Natural killer cell (primary cell): ENCODE measurements at regions of chr2 and their contacts with region 1.

Region 1: DNA sequence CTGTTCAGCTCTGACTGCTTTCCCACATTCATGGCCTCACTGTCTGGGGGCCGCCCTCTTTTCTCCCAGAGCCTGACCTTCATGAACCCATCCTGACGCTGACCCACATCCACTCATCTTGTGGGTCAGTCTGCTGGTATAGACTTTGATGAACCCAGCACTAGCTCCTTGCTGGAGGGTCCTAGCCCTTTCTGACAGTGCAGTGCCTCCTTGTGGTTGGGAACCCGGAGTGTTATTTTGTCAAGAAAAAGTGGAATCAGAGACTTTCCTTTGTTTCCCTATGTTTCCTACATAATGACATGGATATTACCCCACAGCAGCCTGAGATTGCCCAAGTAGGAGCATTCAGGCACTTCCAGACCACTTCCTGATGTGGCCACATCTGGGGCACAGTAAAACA is 19.3 kb upstream of the OSR1 start:
- DNase-seq: peak in 1 of 2 donors; percentile 33
- ATAC-seq: no peak
- H3K4me3 ChIP-seq: no peak overlapping the region
- H3K4me3 Mint-ChIP-seq: no peak overlapping the region
- H3K27ac ChIP-seq: no peak overlapping the region
- H3K27ac Mint-ChIP-seq: no peak overlapping the region
- H3K4me1 ChIP-seq: no peaks in the 10 kb centered on the region
- H3K4me1 Mint-ChIP-seq: no peaks in the 10 kb centered on the region
- H3K27me3 ChIP-seq: peaks cover 2% of the 10 kb centered on the region
- H3K27me3 Mint-ChIP-seq: peaks cover 20 to 49% of the 10 kb centered on the region in 2 donors
- CTCF ChIP-seq: no peak

Region 2: GRCh38 chr2:18520451-18521425 is 857.0 kb before region 1 on chr2:
- intact Hi-C with region 1: loop called (anchors 10 kb)
- DNase-seq: peak; percentile 67 to 82
- ATAC-seq: peak; percentile 62 to 86 (median 65)
- H3K4me3 ChIP-seq: no peak overlapping the region
- H3K4me3 Mint-ChIP-seq: no peak overlapping the region
- H3K27ac ChIP-seq: no peak overlapping the region
- H3K27ac Mint-ChIP-seq: no peak overlapping the region
- H3K4me1 ChIP-seq: no peaks in the 10 kb centered on the region
- H3K4me1 Mint-ChIP-seq: no peaks in the 10 kb centered on the region
- H3K27me3 ChIP-seq: no peaks in the 10 kb centered on the region
- H3K27me3 Mint-ChIP-seq: peaks cover 6 to 11% of the 10 kb centered on the region in 2 donors
- CTCF ChIP-seq: peak; percentile 90